ENCODE measurements at regions of chr3 and their contacts with region 1.

Region 1: GRCh38 chr3:13091898-13092611 is 18.8 kb upstream of the IQSEC1 start:
- DNase-seq: peak; percentile 37 to 88 (median 69)
- ATAC-seq: peak; percentile 80 to 86 (median 82)
- H3K4me3 ChIP-seq: no peak overlapping the region
- H3K4me3 Mint-ChIP-seq: no peak overlapping the region
- H3K27ac ChIP-seq: no peak overlapping the region
- H3K27ac Mint-ChIP-seq: no peak overlapping the region
- H3K4me1 ChIP-seq: peaks cover 0 to 7% of the 10 kb centered on the region in 2 experiments
- H3K4me1 Mint-ChIP-seq: peaks cover 2 to 15% (median 7%) of the 10 kb centered on the region in 3 donors
- H3K27me3 ChIP-seq: peaks cover 0 to 32% of the 10 kb centered on the region in 2 experiments
- H3K27me3 Mint-ChIP-seq: peaks cover 9 to 12% of the 10 kb centered on the region in 2 donors

Region 2: GRCh38 chr3:13122081-13123012 is 30.3 kb after region 1 on chr3:
- CTCF ChIA-PET with region 1: no interaction called
- POLR2A ChIA-PET with region 1: no interaction called
- DNase-seq: no peak
- ATAC-seq: no peak
- H3K4me3 ChIP-seq: no peak overlapping the region
- H3K4me3 Mint-ChIP-seq: no peak overlapping the region
- H3K27ac ChIP-seq: no peak overlapping the region
- H3K27ac Mint-ChIP-seq: no peak overlapping the region
- H3K4me1 ChIP-seq: no peaks in the 10 kb centered on the region
- H3K4me1 Mint-ChIP-seq: no peaks in the 10 kb centered on the region
- H3K27me3 ChIP-seq: peaks cover 0 to 17% of the 10 kb centered on the region in 2 experiments
- H3K27me3 Mint-ChIP-seq: peaks cover 2 to 4% of the 10 kb centered on the region in 2 donors

Region 3: DNA sequence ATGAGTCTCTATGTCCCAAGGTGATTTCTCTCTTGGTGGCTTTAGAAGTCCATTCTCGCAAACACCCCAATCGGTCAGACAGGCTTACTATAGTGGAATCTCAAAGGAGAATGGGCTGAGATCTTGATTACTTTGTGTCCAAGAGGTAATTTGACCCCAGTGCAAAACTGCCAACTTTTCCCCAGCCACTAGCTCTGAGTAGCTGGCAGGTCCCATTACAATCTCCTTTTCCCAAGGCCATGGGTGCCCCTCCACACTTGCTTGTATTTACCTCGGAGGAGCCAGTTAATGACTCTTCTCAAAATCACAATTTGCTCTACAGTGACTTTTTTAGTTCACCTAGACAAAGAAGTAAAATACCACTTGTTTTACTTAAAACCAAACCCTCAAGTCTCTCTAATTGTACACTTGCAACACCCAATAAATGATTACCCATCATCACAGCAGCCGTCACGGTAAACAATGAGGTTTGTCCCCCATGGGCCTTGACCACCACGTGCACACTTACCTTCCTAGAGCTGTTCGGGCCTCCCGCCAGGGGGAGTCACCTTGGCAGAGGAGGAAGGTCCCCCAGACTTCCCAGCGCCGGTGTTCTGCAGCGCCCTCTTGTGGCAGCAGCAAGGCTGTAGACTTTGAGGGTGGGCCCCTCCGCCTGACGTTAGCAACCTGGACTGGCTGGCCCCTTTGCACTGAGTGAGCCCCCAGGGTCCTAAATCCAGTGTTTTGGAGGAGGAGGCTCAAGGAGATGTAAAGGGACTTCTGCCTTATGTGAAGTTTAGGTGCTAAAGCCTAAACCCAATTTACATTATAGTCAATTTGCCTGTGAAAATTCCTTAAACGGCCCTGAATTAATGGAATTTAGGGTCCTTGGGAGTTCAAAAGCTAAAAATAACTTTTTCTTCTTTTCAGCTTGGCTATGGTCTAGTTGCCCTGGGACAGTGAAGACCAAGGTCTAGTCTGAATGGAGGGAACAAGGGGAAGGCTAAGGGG is 369.4 kb after region 1 on chr3:
- CTCF ChIA-PET with region 1: interaction called, 7 to 13 read pairs
- POLR2A ChIA-PET with region 1: no interaction called
- DNase-seq: peak; percentile 34 to 85 (median 68)
- ATAC-seq: peak; percentile 75 to 98 (median 84)
- H3K4me3 ChIP-seq: no peak overlapping the region
- H3K4me3 Mint-ChIP-seq: no peak overlapping the region
- H3K27ac ChIP-seq: no peak overlapping the region
- H3K27ac Mint-ChIP-seq: peak overlapping the region; percentile 34 to 52
- H3K4me1 ChIP-seq: no peaks in the 10 kb centered on the region
- H3K4me1 Mint-ChIP-seq: peaks cover 0 to 5% (median 4%) of the 10 kb centered on the region in 3 donors
- H3K27me3 ChIP-seq: peaks cover 0 to 39% of the 10 kb centered on the region in 2 experiments
- H3K27me3 Mint-ChIP-seq: peaks cover 4 to 16% of the 10 kb centered on the region in 2 donors